ENCODE measurements at regions of chr12 and their contacts with region 1.

Region 1: DNA sequence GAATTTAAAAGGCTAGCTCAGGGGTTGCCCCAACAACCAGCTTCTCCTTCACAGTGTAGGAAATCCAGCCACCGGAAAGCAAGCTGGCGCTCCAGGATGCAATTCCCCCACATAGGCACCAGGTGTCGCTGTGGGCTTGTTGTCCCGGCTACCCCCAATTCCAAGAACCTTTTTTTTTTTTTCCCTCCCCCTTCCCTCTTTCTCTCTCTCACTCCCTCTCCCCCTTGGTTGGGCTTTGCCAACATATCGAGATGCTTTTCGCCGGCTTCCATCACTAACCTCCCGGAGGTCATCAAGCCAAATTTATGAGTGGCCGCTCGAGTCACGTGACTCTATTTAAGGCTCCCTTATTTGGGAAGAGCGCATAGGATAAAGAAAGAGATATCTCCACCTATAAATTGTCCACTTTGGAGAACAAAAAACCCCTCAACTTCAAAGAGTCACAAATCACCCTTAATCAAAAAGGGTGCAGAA is at the start of gene HOXC5:
- DNase-seq: peak; percentile 78 to 90 (median 88)
- H3K4me3 ChIP-seq: peak within 1 kb of the TSS; percentile 35
- H3K27ac ChIP-seq: peak within 1 kb of the TSS; percentile 86 to 95
- H3K4me1 ChIP-seq: peaks cover 10% of the 10 kb centered on the region
- H3K27me3 ChIP-seq: no peaks in the 10 kb centered on the region
- CTCF ChIP-seq: peak; percentile 88 to 97 (median 92)
- EP300 ChIP-seq: no peak
- POLR2A ChIP-seq: no peak
- total RNA-seq, gene HOXC5: 1.8 to 11.0 (median 3.6) TPM

Region 2: GRCh38 chr12:54126696-54127537 is 94.3 kb after region 1 on chr12:
- intact Hi-C with region 1: loop called (anchors 5 to 10 kb)
- DNase-seq: peak; percentile 85 to 87 (median 86)
- H3K4me3 ChIP-seq: peak overlapping the region; percentile 87
- H3K27ac ChIP-seq: peak overlapping the region; percentile 35 to 76
- H3K4me1 ChIP-seq: peaks cover 4% of the 10 kb centered on the region
- H3K27me3 ChIP-seq: no peaks in the 10 kb centered on the region
- CTCF ChIP-seq: no peak
- EP300 ChIP-seq: no peak
- POLR2A ChIP-seq: peak; percentile 72

Region 3: DNA sequence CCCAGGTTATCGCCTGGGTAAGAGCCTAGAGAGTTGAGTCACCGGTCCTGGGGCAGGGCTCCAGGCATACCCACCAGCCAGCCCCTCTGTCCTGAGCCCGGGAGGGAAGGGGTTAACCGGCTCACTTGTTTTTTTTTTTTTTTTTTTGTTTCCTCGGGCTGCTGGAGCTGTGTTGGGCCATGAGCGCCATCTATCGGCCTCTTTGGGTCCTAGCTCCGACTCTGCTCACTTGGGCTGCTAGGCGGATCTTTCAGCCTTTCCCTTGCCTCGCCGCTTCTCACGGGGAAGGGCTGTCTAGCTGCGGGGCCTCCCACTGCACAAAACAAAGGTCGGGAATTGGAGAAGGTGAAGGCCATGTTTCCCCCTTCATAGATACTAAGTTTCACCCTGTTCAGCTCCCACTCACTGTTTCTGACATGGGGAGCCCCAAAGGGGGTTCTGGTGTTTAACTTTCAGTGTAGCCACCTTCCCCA is 158.9 kb after region 1 on chr12:
- intact Hi-C with region 1: loop called (anchors 2 to 5 kb)
- DNase-seq: peak; percentile 82 to 88 (median 88)
- H3K4me3 ChIP-seq: no peak overlapping the region
- H3K27ac ChIP-seq: no peak overlapping the region
- H3K4me1 ChIP-seq: no peaks in the 10 kb centered on the region
- H3K27me3 ChIP-seq: no peaks in the 10 kb centered on the region
- CTCF ChIP-seq: peak; percentile 75 to 85 (median 82)
- EP300 ChIP-seq: no peak
- POLR2A ChIP-seq: no peak